ENCODE measurements at regions of chr17 and their contacts with region 1.

Region 1: GRCh38 chr17:79915850-79916430 is 76.7 kb upstream of the CBX4 start:
- DNase-seq: peak; percentile 41 to 65 (median 52)
- ATAC-seq: peak in 2 of 4 donors; percentile 18 to 39
- H3K4me3 ChIP-seq: no peak overlapping the region
- H3K27ac ChIP-seq: no peak overlapping the region
- H3K4me1 ChIP-seq: peaks cover 0 to 30% (median 9%) of the 10 kb centered on the region in 12 donors
- H3K27me3 ChIP-seq: peaks cover 0 to 41% (median 12%) of the 10 kb centered on the region in 9 donors
- CTCF ChIP-seq: peak in 10 of 12 donors; percentile 11 to 50 (median 34)
- POLR2A ChIP-seq: no peak

Region 2: GRCh38 chr17:79741751-79742588 is 174.0 kb before region 1 on chr17:
- intact Hi-C with region 1: loop called in 3 of 10 experiments (anchors 5 to 10 kb)
- DNase-seq: peak; percentile 62 to 88 (median 69)
- ATAC-seq: peak in 3 of 4 donors; percentile 65 to 77 (median 70)
- H3K4me3 ChIP-seq: peak overlapping the region in 4 of 12 donors; percentile 21 to 32 (median 24)
- H3K27ac ChIP-seq: no peak overlapping the region
- H3K4me1 ChIP-seq: peaks cover 0 to 18% (median 7%) of the 10 kb centered on the region in 12 donors
- H3K27me3 ChIP-seq: peaks cover 16 to 71% (median 52%) of the 10 kb centered on the region in 9 donors
- CTCF ChIP-seq: peak; percentile 85 to 97 (median 93)
- POLR2A ChIP-seq: no peak

Region 3: GRCh38 chr17:79789534-79790353 is 126.2 kb before region 1 on chr17:
- intact Hi-C with region 1: loop called in 7 of 10 experiments (anchors 1 to 10 kb)
- DNase-seq: peak in 3 of 5 donors; percentile 45 to 82 (median 68)
- ATAC-seq: peak in 3 of 4 donors; percentile 42 to 65 (median 47)
- H3K4me3 ChIP-seq: peak overlapping the region in 5 of 12 donors; percentile 7 to 28 (median 10)
- H3K27ac ChIP-seq: no peak overlapping the region
- H3K4me1 ChIP-seq: peaks cover 0 to 53% (median 30%) of the 10 kb centered on the region in 12 donors
- H3K27me3 ChIP-seq: peaks cover 41 to 87% (median 62%) of the 10 kb centered on the region in 9 donors
- CTCF ChIP-seq: peak; percentile 66 to 88 (median 79)
- POLR2A ChIP-seq: no peak

Region 4: DNA sequence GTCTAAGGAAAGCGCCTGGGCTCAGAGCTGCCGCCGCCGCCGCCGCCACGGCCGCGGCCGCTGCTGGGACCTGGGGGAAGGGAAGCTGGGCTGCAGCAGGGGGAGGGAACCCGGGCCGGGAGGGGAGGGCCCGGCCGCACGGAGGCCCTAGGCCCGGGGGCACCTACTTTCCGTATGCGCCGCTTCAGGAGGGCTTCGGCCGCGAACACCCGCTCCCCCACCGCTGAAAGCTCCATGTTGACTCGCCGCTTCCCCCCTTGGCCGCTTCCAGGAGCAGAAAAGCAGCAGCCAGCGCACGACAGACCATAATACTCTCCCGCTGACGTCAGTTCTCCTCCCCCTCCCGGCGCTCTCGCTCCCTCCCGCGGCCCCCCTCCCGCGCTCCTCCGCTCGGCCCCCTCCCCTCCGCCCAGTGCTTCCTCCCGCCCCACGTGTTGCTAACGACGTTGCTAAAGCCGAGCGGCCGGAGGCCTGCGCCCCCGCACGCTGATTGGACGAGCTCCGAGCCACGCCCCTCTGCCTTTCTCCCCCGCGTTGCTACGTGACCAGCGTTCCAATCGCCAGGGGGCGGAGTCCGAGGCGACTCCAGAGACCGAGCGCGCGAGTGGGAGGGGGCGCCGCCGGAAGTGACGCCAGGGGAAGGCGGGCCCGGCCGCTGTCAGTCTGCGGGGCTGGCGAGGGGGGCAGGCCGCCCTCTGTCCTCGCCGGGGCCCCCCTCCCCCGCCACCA is 119.0 kb before region 1 on chr17 and contains the start of gene CBX8:
- intact Hi-C with region 1: loop called in 2 of 10 experiments (anchors 5 to 10 kb)
- DNase-seq: peak; percentile 100
- ATAC-seq: peak; percentile 93 to 99 (median 97)
- H3K4me3 ChIP-seq: peak within 1 kb of the TSS; percentile 56 to 95 (median 74)
- H3K27ac ChIP-seq: peak within 1 kb of the TSS; percentile 49 to 92 (median 86)
- H3K4me1 ChIP-seq: peaks cover 3 to 67% (median 50%) of the 10 kb centered on the region in 12 donors
- H3K27me3 ChIP-seq: peaks cover 50 to 67% (median 61%) of the 10 kb centered on the region in 9 donors
- CTCF ChIP-seq: peak in 10 of 12 donors; percentile 8 to 51 (median 27)
- POLR2A ChIP-seq: peak in 1 of 2 donors; percentile 54
- total RNA-seq, gene CBX8: 1.5 to 9.2 (median 5.3) TPM

Region 5: GRCh38 chr17:79803997-79804855 is 111.7 kb before region 1 on chr17:
- intact Hi-C with region 1: loop called in 2 of 10 experiments (anchors 5 to 10 kb)
- DNase-seq: no peak
- ATAC-seq: no peak
- H3K4me3 ChIP-seq: peak overlapping the region in 2 of 12 donors; percentile 25 to 44
- H3K27ac ChIP-seq: no peak overlapping the region
- H3K4me1 ChIP-seq: peaks cover 0 to 55% (median 21%) of the 10 kb centered on the region in 12 donors
- H3K27me3 ChIP-seq: peaks cover 85 to 100% (median 97%) of the 10 kb centered on the region in 9 donors
- CTCF ChIP-seq: no peak
- POLR2A ChIP-seq: no peak

Region 6: DNA sequence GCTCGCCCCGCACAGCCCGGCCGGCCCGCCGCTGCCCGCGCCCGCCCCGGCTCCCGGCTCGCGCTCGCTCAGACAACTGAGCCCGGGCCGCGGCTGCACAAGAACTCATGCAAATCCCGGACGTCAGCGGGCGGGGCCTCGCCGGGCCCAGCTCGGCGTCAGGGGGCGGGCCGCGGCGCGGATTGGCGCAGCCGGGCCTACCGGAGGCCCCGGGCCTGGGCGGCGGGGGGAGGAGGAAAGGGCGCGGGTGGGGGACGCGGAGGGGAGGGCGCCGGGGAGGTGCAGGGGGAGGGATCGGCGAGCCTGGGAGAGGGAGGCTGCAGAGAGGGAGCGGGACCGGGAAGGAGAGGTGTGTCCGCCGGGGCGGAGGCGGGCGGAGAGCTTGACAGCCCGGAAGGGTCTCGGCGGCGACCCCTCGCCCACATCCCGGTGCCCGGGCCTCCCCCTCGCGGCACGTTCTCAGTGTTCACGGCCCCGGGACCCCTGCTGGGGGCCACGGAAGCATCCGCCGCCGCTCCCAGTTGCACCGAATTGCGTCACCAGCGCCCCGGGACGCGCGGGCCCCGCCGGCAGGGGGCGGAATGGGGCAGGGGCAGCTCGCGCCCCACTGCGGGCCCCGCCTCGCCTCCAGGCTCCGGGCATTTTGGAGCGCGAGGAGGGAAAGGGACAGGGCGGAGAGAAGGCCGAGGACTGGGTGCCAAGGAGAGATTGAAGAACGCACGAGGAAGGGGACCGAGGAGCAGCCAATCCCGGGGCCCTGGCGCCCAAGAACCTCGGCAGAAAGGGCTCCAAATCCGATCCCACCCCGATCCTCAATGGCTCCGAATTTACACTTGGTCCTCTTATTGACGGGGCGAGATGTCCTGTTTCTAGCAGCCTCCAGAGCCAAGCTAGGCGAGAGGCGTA is 76.3 kb before region 1 on chr17 and contains the start of gene CBX4:
- intact Hi-C with region 1: loop called in 3 of 10 experiments (anchors 5 to 10 kb)
- DNase-seq: peak; percentile 96 to 98 (median 97)
- ATAC-seq: peak; percentile 79 to 84 (median 82)
- H3K4me3 ChIP-seq: peak within 1 kb of the TSS; percentile 53 to 99 (median 82)
- H3K27ac ChIP-seq: peak within 1 kb of the TSS; percentile 71 to 97 (median 94)
- H3K4me1 ChIP-seq: peaks cover 0 to 81% (median 64%) of the 10 kb centered on the region in 12 donors
- H3K27me3 ChIP-seq: peaks cover 27 to 48% (median 38%) of the 10 kb centered on the region in 9 donors
- CTCF ChIP-seq: peak; percentile 37 to 79 (median 66)
- POLR2A ChIP-seq: peak in 1 of 2 donors; percentile 85
- total RNA-seq, gene CBX4: 16.7 to 41.1 (median 26.9) TPM

Region 7: DNA sequence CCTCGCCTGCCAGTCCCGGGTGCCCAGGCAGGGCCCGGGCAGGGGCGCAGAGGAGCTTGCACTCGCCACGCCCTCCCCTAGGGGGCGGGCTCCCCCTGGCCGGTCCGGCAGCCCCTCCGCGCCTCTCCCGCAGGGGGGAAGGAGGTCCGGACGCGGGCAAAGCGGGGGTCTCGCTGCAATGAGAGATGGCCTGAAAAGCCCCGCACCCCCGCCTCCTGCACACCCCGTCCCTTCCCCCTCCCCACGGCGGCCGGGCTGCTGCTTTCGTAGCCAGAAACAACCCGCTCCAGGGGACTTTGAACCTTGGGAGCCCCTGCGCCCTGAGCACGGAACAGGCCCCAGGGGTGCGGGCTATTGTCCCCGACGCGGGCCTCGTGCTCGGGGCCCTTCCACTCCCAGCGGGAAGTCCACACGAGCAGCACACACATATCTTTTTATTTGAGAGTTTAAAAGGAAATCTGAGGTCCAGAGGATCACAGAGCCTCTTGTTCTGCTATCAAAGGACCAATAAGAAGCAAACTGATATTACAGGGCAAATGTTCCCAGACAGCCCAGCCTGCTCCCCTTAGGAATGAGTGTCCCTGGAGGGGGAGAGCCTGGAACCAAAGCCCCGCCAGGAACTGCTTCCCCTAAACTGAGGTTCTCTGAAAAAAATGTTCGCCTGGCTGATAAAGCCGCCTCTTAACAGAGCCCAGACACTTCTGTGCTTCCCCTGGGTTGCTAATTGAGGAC is 70.9 kb before region 1 on chr17:
- intact Hi-C with region 1: loop called in 5 of 10 experiments (anchors 5 to 10 kb)
- DNase-seq: peak in 4 of 5 donors; percentile 62 to 84 (median 65)
- ATAC-seq: peak; percentile 38 to 80 (median 70)
- H3K4me3 ChIP-seq: peak overlapping the region; percentile 43 to 79 (median 65)
- H3K27ac ChIP-seq: peak overlapping the region in 10 of 12 donors; percentile 50 to 86 (median 68)
- H3K4me1 ChIP-seq: peaks cover 0 to 61% (median 50%) of the 10 kb centered on the region in 12 donors
- H3K27me3 ChIP-seq: peaks cover 27 to 55% (median 34%) of the 10 kb centered on the region in 9 donors
- CTCF ChIP-seq: peak; percentile 72 to 89 (median 80)
- POLR2A ChIP-seq: no peak

Region 8: DNA sequence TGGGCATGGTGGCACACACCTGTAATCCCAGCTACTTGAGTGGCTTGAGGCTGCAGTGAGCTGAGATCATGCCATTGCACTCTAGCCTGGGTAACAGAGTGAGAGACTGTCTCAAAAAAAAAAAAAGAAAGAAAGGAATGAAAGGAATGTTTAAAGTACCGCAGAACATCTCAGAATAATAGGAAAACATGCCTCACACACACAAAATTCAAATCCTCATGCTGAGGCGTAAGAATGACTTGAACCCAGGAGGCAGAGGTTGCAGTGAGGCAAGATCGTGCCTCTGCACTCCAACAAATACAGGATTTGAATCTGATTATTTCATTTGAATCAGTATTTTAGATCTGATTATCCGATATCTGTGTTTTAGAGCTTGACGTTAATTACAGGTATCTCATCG is 164.1 kb after region 1 on chr17:
- intact Hi-C with region 1: no loop called
- DNase-seq: no peak
- ATAC-seq: no peak
- H3K4me3 ChIP-seq: no peak overlapping the region
- H3K27ac ChIP-seq: no peak overlapping the region
- H3K4me1 ChIP-seq: peaks cover 0 to 8% (median 4%) of the 10 kb centered on the region in 12 donors
- H3K27me3 ChIP-seq: no peaks in the 10 kb centered on the region
- CTCF ChIP-seq: no peak
- POLR2A ChIP-seq: no peak

Measured in heart left ventricle (tissue), 16 donors.